ENCODE measurements at regions of chr12 and their contacts with region 1.

Region 1: DNA sequence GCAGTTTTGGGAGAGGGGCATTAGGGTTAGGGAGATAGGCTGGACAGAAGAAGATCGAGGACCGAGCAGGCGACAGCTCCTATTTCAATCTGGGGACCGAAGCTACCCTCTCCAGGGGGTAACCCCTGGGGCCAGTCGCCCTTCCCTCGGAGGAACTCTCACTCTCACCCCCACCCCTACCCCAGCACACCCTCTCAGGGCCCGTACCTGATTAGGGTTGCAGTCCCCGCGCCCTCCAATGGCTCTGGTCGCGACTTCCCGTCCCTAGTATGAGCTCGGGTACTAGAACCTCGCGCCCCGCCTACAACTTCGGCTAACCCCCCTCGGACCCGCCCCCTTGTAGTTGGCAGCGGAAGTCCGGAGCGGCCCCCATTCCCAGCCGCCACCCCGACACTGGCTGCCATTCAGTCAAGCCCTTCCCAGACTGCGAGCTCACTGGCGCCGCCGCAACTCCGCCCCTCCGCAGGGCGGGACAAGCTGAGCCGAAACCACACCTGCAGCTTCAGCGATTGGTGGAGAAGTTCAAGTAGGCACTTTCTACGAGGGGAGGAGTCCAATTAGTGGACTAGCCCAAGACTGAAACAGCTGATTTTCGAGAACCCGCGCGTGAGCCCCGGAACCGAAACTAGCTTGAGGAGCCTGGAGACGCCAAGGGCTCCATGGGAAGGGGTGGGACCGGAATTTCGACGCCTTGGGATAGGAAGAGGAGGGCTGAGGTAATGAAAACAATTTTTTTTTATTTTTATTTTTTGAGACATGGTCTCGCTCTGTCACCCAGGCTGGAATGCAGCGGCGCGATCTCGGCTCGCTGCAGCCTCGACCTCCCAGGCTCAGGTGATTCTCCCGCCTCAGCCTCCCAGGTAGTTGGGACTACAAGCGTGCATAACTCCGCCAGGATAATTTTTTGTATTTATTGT is at the start of gene STAT2:
- DNase-seq: peak; percentile 95

Region 2: GRCh38 chr12:56315622-56316473 is 44.3 kb before region 1 on chr12 and contains the start of gene CNPY2:
- CTCF ChIA-PET with region 1: no interaction called
- POLR2A ChIA-PET with region 1: interaction called, 19 read pairs
- DNase-seq: peak; percentile 92

Region 3: DNA sequence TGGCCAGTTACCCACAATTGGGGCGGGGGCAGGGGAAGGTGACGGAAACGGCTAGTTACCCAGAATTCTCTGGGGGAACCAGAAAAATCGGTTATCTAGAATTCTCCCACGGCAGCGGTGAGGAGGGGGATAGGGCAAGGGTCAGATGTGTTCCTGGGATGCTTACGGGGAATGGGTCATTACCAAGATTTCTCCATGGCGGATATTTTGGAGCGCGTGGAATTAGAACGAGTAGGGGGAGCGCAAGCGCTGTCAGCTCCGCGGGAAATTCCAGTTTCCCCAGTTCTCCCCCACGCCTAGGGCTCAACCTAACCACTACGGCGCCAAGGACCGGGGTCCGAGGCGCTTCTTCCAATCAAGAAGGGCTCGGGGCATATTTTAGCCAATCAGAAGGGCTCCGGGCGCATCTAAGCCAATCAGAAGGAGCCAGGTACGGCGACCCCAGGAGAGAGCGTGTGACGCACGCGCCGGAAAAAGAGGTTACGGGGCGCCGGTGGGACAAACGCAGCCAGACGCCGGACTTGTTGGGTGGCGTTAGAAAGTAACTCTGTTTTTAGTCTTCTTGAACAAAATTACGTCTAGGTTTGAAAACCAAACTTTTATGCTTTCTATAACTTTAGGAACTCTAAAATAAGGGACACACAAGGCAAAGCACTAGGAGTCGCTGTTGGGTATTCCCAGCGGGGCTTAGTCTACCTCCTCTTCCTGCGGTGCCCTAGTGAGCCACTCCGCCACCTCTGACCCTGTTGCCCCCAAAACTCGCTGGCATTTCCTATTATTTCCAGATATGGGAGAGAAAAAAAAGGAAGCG is 26.2 kb before region 1 on chr12 and contains the start of gene PAN2:
- CTCF ChIA-PET with region 1: no interaction called
- POLR2A ChIA-PET with region 1: interaction called, 29 read pairs
- DNase-seq: peak; percentile 95

Region 4: DNA sequence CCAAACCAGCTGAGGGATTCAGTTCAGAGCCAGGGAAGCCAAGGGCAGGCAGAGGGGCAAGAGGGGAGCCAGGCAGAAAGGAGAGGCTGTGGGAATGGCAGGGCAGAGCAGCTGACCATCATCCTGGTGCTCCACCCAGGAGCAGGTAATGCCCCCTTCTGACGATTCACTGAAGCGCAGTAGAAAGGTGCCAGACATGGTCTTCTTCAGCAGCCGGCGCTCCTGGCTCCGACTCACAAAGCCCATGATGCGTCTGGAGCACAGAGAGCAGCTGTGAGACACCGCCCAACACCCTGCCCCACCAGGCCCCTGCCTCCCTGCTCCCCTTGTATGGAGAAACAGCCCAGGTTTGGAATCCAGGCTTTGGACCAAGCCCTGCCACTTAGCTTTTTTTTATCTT is 13.4 kb before region 1 on chr12:
- CTCF ChIA-PET with region 1: interaction called, 5 read pairs
- POLR2A ChIA-PET with region 1: interaction called, 22 read pairs
- DNase-seq: no peak

Region 5: GRCh38 chr12:56448860-56449621 is 88.9 kb after region 1 on chr12 and contains the start of gene TIMELESS:
- CTCF ChIA-PET with region 1: no interaction called
- POLR2A ChIA-PET with region 1: interaction called, 46 read pairs
- DNase-seq: peak; percentile 92

Region 6: DNA sequence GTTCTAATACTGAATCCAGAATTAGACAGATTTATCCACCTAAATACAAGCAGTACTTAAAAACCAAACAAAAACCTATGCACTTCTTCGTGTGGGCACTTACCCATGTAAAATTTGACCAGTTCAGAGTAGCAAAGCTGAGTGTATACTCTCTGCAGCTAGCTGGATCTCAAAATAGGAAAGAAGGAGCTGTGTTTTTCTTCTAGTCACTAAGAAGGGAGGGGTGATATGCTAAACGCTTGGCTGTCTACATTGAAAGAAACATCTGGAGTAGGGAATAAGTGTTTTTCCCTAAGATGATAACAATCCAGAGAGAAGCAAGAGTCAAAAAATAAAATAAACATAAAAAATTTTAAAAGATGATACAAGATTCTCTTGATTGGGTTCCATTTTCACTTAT is 181.5 kb after region 1 on chr12:
- CTCF ChIA-PET with region 1: no interaction called
- POLR2A ChIA-PET with region 1: no interaction called
- DNase-seq: no peak

Region 7: DNA sequence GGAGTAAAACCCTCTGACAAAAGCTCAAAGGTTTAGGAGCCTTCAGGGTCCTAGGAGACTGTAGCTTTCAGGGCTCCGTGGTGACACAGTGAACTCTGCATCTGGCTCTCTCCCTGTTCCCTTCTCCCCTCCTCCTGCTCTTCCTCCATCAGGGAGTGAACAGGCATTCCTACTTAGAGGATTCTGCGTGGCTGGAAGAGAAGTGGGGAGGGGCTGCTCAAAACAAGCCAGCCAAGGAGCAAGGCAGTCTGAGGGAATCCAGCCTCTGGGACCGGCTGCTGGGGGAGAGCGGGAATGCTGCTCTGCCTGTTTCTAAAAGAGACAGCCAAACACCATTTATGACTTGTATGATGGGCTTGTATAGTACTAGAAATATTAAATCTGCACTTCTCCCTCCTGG is 211.0 kb after region 1 on chr12:
- CTCF ChIA-PET with region 1: no interaction called
- POLR2A ChIA-PET with region 1: no interaction called
- DNase-seq: no peak